Naive thymus-derived CD4-positive, alpha-beta T cell (primary cell): ENCODE measurements at regions of chr13 and their contacts with region 1.

Region 1: GRCh38 chr13:74287724-74288169 is 153.5 kb upstream of the KLF12 start:
- DNase-seq: peak; percentile 40 to 98 (median 90)
- ATAC-seq: peak; percentile 74
- H3K4me3 ChIP-seq: peak overlapping the region; percentile 51
- H3K4me3 Mint-ChIP-seq: peak overlapping the region; percentile 68 to 91 (median 82)
- H3K27ac ChIP-seq: peak overlapping the region; percentile 82
- H3K27ac Mint-ChIP-seq: peak overlapping the region; percentile 79 to 96 (median 94)
- H3K4me1 ChIP-seq: peaks cover 26 to 48% of the 10 kb centered on the region in 2 donors
- H3K4me1 Mint-ChIP-seq: peaks cover 41 to 77% (median 71%) of the 10 kb centered on the region in 7 donors
- H3K27me3 ChIP-seq: no peaks in the 10 kb centered on the region
- H3K27me3 Mint-ChIP-seq: peaks cover 0 to 2% (median 0%) of the 10 kb centered on the region in 5 donors

Region 2: DNA sequence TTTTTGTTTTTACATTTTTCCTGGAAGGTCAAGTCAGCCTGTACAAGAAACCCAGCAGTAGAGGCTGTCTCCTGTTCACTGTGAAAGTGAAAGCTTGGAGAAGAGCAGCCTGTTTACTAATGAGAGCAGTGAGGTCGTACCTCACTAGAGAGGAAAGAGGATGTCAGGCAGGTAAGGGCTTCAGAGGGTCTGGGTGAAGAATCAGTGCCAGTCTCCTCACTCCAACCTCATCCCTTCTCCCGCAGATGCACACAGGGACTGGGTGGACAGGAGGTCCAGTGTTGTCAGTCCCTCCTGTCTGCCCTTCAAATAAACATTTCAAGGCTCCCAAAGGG is 766.5 kb before region 1 on chr13:
- CTCF ChIA-PET with region 1: no interaction called
- POLR2A ChIA-PET with region 1: interaction called, 4 read pairs
- intact Hi-C with region 1: loop called in 1 of 2 experiments (anchors 5 kb)
- DNase-seq: peak in 6 of 9 donors; percentile 35 to 57 (median 52)
- ATAC-seq: peak; percentile 79
- H3K4me3 ChIP-seq: peak overlapping the region; percentile 59
- H3K4me3 Mint-ChIP-seq: peak overlapping the region; percentile 82 to 93 (median 88)
- H3K27ac ChIP-seq: peak overlapping the region; percentile 71
- H3K27ac Mint-ChIP-seq: peak overlapping the region; percentile 89 to 99 (median 97)
- H3K4me1 ChIP-seq: peaks cover 0 to 13% of the 10 kb centered on the region in 2 donors
- H3K4me1 Mint-ChIP-seq: peaks cover 9 to 32% (median 25%) of the 10 kb centered on the region in 7 donors
- H3K27me3 ChIP-seq: no peaks in the 10 kb centered on the region
- H3K27me3 Mint-ChIP-seq: peaks cover 0 to 3% (median 0%) of the 10 kb centered on the region in 5 donors

Region 3: DNA sequence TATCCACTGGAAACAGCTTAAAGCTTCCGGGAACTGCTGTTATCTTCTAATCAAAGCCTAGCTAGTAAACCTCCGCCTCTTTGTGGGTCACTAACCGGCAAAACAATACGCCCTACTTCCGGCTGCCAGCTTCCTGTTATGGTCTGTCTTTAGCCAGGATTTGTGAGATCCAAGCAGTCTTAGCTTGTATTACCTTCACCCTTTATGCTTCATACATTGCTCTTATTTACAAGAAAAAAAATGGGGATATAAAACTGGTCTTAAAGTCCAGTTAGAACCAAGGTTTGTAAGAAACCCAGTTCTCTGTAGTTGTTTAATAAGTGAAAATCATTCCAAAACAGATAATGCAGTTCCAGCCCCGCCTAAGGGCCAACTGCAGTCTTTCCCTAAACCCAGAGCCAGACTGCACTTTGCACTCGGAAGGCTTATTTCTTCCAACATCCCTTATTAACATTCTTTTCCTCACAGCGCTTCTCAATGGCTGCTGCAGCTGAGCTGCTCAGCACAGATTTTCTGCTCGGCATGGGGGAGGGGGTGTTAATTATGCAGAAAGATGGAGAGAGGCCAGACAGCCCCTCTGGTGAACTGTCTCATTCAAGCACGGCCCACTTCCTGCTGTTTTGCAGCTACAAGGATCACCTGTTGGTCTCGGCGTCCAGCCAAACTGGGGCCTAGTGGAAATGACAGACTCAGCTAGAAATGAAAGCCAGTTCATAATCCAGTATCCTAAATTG is 521.9 kb before region 1 on chr13:
- CTCF ChIA-PET with region 1: interaction called, 8 read pairs
- POLR2A ChIA-PET with region 1: interaction called, 36 read pairs
- intact Hi-C with region 1: loop called (anchors 1 kb)
- DNase-seq: peak; percentile 29 to 91 (median 85)
- ATAC-seq: peak; percentile 92
- H3K4me3 ChIP-seq: peak overlapping the region; percentile 52
- H3K4me3 Mint-ChIP-seq: peak overlapping the region; percentile 77 to 87 (median 85)
- H3K27ac ChIP-seq: peak overlapping the region; percentile 77
- H3K27ac Mint-ChIP-seq: peak overlapping the region; percentile 90 to 100 (median 98)
- H3K4me1 ChIP-seq: peaks cover 37 to 52% of the 10 kb centered on the region in 2 donors
- H3K4me1 Mint-ChIP-seq: peaks cover 37 to 92% (median 89%) of the 10 kb centered on the region in 7 donors
- H3K27me3 ChIP-seq: no peaks in the 10 kb centered on the region
- H3K27me3 Mint-ChIP-seq: no peaks in the 10 kb centered on the region

Region 4: GRCh38 chr13:73984949-73985691 is 302.6 kb before region 1 on chr13:
- CTCF ChIA-PET with region 1: interaction called, 22 read pairs
- POLR2A ChIA-PET with region 1: interaction called, 10 read pairs
- intact Hi-C with region 1: loop called (anchors 1 kb)
- DNase-seq: peak; percentile 48 to 95 (median 91)
- ATAC-seq: peak; percentile 94
- H3K4me3 ChIP-seq: peak overlapping the region; percentile 14
- H3K4me3 Mint-ChIP-seq: peak overlapping the region in 9 of 10 donors; percentile 67 to 89 (median 78)
- H3K27ac ChIP-seq: peak overlapping the region; percentile 82
- H3K27ac Mint-ChIP-seq: peak overlapping the region in 1 of 9 donors; percentile 80
- H3K4me1 ChIP-seq: peaks cover 28 to 52% of the 10 kb centered on the region in 2 donors
- H3K4me1 Mint-ChIP-seq: peaks cover 28 to 54% (median 44%) of the 10 kb centered on the region in 7 donors
- H3K27me3 ChIP-seq: no peaks in the 10 kb centered on the region
- H3K27me3 Mint-ChIP-seq: no peaks in the 10 kb centered on the region

Region 5: GRCh38 chr13:74187564-74187963 is 100.2 kb before region 1 on chr13:
- CTCF ChIA-PET with region 1: interaction called, 4 read pairs
- POLR2A ChIA-PET with region 1: interaction called, 4 read pairs
- intact Hi-C with region 1: loop called in 1 of 2 experiments (anchors 2 kb)
- DNase-seq: no peak
- ATAC-seq: no peak
- H3K4me3 ChIP-seq: no peak overlapping the region
- H3K4me3 Mint-ChIP-seq: no peak overlapping the region
- H3K27ac ChIP-seq: no peak overlapping the region
- H3K27ac Mint-ChIP-seq: no peak overlapping the region
- H3K4me1 ChIP-seq: peaks cover 5 to 6% of the 10 kb centered on the region in 2 donors
- H3K4me1 Mint-ChIP-seq: peaks cover 7 to 20% (median 14%) of the 10 kb centered on the region in 7 donors
- H3K27me3 ChIP-seq: no peaks in the 10 kb centered on the region
- H3K27me3 Mint-ChIP-seq: no peaks in the 10 kb centered on the region

Region 6: DNA sequence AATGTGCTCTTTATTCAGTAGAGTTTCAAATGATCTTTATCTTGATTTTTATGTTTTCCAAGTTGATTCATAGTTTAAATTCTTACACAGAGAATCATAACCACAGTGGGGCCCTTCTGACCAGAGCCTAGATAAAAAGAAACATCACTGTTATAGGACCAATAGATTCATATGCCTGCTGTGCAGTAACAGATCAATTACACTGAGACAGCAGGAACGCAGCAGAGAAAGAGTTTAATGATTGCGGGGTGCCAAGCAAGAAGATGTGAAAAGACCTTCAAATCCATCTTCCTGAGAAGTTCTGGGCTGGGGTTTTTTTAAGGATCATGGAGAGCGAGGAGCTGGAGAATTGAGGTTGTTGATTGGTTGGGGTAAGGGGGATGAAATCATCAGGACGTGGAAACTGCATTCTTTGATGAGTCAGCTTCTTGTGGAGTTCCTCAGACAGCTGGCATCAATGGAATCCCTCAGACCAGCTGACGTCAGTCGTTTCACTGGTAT is 847.6 kb after region 1 on chr13:
- CTCF ChIA-PET with region 1: no interaction called
- POLR2A ChIA-PET with region 1: no interaction called
- intact Hi-C with region 1: no loop called
- DNase-seq: no peak
- ATAC-seq: no peak
- H3K4me3 ChIP-seq: no peak overlapping the region
- H3K4me3 Mint-ChIP-seq: no peak overlapping the region
- H3K27ac ChIP-seq: no peak overlapping the region
- H3K27ac Mint-ChIP-seq: no peak overlapping the region
- H3K4me1 ChIP-seq: no peaks in the 10 kb centered on the region
- H3K4me1 Mint-ChIP-seq: no peaks in the 10 kb centered on the region
- H3K27me3 ChIP-seq: no peaks in the 10 kb centered on the region
- H3K27me3 Mint-ChIP-seq: peaks cover 0 to 29% (median 16%) of the 10 kb centered on the region in 5 donors

Region 7: GRCh38 chr13:75219479-75220237 is 931.9 kb after region 1 on chr13:
- CTCF ChIA-PET with region 1: interaction called, 4 read pairs
- POLR2A ChIA-PET with region 1: no interaction called
- intact Hi-C with region 1: loop called in 1 of 2 experiments (anchors 2 kb)
- DNase-seq: peak; percentile 67 to 87 (median 79)
- ATAC-seq: peak; percentile 96
- H3K4me3 ChIP-seq: no peak overlapping the region
- H3K4me3 Mint-ChIP-seq: peak overlapping the region; percentile 28 to 77 (median 58)
- H3K27ac ChIP-seq: no peak overlapping the region
- H3K27ac Mint-ChIP-seq: peak overlapping the region in 2 of 9 donors; percentile 34 to 87
- H3K4me1 ChIP-seq: peaks cover 0 to 4% of the 10 kb centered on the region in 2 donors
- H3K4me1 Mint-ChIP-seq: peaks cover 6 to 7% (median 7%) of the 10 kb centered on the region in 7 donors
- H3K27me3 ChIP-seq: no peaks in the 10 kb centered on the region
- H3K27me3 Mint-ChIP-seq: peaks cover 15 to 48% (median 27%) of the 10 kb centered on the region in 5 donors